CD8-positive, alpha-beta T cell (primary cell): ENCODE measurements at regions of chr17 and their contacts with region 1.

Region 1: DNA sequence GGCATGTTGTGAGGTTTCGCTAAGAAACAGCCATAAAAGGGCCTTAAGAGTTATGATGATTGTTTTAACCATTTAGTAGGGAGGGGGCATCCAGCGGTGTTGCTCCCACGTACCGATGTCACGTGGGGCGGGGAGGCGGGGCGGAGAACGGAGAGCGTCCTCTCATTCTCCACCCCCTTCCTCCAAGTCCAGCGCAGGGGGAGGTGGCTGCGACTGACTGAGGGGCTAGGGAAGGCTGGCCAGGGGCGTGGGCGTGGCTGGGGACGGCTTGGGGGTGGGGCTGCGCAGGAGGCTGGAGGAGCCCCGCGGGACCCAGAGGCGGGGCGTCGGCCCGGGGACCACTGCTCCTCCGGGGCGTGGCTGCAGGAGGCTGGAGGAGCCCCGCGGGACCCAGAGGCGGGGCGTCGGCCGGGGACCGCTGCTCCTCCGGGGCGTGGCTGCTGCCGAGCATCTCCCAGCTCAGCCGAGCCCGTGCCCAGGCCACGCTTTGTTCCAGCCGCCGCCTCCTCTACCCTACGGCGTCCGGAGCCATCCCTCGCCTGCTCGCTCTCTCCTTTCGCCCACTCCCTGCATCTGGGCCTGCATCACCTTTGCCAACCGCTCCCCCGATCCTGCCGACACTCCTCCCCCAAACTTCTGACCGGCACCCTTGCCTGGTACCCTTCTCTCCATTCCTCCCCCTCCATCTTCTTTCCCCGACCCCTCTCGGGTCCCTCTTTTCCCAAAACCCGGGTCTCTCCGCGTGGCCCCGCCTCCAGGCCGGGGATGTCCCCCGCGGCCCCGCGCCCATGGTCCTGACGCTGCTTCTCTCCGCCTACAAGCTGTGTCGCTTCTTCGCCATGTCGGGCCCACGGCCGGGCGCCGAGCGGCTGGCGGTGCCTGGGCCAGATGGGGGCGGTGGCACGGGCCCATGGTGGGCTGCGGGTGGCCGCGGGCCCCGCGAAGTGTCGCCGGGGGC is at the start of gene SARM1:
- DNase-seq: peak; percentile 45 to 91 (median 81)
- ATAC-seq: peak; percentile 86
- H3K4me3 ChIP-seq: peak within 1 kb of the TSS; percentile 79
- H3K4me3 Mint-ChIP-seq: peak within 1 kb of the TSS; percentile 90
- H3K27ac ChIP-seq: peak within 1 kb of the TSS; percentile 69 to 93
- H3K27ac Mint-ChIP-seq: peak within 1 kb of the TSS; percentile 91
- H3K4me1 ChIP-seq: peaks cover 21% of the 10 kb centered on the region
- H3K4me1 Mint-ChIP-seq: peaks cover 25% of the 10 kb centered on the region
- H3K27me3 ChIP-seq: no peaks in the 10 kb centered on the region
- H3K27me3 Mint-ChIP-seq: no peaks in the 10 kb centered on the region
- CTCF ChIP-seq: no peak
- total RNA-seq, gene SARM1: 12.9 to 13.9 TPM

Region 2: DNA sequence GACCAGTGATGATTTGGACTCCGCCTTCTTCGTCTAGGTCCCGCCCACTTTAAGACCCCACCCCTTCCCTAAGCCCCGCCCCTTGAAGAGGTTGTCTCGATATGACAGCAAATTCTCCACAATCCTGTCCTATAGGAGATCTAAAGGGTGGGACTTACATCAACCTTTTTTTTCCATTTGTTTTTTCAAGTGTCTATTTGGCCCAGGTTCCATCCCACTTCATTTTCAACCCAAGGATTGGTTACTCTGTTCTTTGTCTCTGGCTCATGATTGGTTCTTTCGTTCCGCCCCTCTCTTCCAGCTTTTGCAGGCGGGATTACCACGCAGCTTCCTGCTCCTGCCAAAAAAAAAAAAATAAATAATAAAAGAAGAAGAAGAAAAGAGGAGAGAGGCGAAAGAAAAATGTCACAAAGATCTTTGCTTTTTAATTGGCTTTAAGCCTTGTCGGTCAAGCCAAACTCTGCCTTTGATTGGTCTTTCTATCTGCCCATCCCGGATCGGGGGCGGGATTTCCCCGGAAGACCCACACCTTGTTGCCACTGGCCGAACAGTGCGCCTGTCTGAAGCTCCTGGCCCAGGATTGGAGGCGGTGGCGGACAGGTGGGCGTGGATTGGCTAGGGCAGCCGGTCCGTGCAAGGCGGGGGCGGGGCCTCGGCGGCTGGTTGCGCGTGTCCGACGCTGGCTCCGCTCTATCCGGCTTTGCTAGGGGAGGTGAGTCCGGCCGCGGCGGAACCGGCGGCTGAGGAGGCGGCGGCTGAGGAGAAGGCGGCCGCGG is 330.3 kb before region 1 on chr17:
- CTCF ChIA-PET with region 1: no interaction called
- POLR2A ChIA-PET with region 1: no interaction called
- intact Hi-C with region 1: loop called in 1 of 2 experiments (anchors 5 kb)
- DNase-seq: peak; percentile 97 to 100 (median 99)
- ATAC-seq: peak; percentile 91
- H3K4me3 ChIP-seq: peak overlapping the region; percentile 62 to 76
- H3K4me3 Mint-ChIP-seq: peak overlapping the region; percentile 87
- H3K27ac ChIP-seq: peak overlapping the region; percentile 24 to 77
- H3K27ac Mint-ChIP-seq: peak overlapping the region; percentile 89
- H3K4me1 ChIP-seq: peaks cover 27% of the 10 kb centered on the region
- H3K4me1 Mint-ChIP-seq: peaks cover 53% of the 10 kb centered on the region
- H3K27me3 ChIP-seq: no peaks in the 10 kb centered on the region
- H3K27me3 Mint-ChIP-seq: no peaks in the 10 kb centered on the region
- CTCF ChIP-seq: no peak

Region 3: GRCh38 chr17:28318759-28319660 is 52.5 kb before region 1 on chr17 and contains the start of gene TMEM97:
- CTCF ChIA-PET with region 1: no interaction called
- POLR2A ChIA-PET with region 1: no interaction called
- intact Hi-C with region 1: loop called in 1 of 2 experiments (anchors 1 kb)
- DNase-seq: peak; percentile 86 to 98 (median 93)
- ATAC-seq: peak; percentile 98
- H3K4me3 ChIP-seq: peak within 1 kb of the TSS; percentile 82
- H3K4me3 Mint-ChIP-seq: peak within 1 kb of the TSS; percentile 84
- H3K27ac ChIP-seq: peak within 1 kb of the TSS; percentile 46 to 52
- H3K27ac Mint-ChIP-seq: peak within 1 kb of the TSS; percentile 49
- H3K4me1 ChIP-seq: peaks cover 19% of the 10 kb centered on the region
- H3K4me1 Mint-ChIP-seq: peaks cover 19% of the 10 kb centered on the region
- H3K27me3 ChIP-seq: no peaks in the 10 kb centered on the region
- H3K27me3 Mint-ChIP-seq: no peaks in the 10 kb centered on the region
- CTCF ChIP-seq: no peak
- total RNA-seq, gene TMEM97: 3.7 to 4.6 TPM

Region 4: GRCh38 chr17:28357061-28357900 is 14.2 kb before region 1 on chr17 and contains the start of gene POLDIP2:
- CTCF ChIA-PET with region 1: interaction called, 5 read pairs
- POLR2A ChIA-PET with region 1: interaction called, 20 read pairs
- intact Hi-C with region 1: loop called (anchors 1 kb)
- DNase-seq: peak; percentile 91 to 97 (median 96)
- ATAC-seq: peak; percentile 98
- H3K4me3 ChIP-seq: peak within 1 kb of the TSS; percentile 92 to 94
- H3K4me3 Mint-ChIP-seq: peak within 1 kb of the TSS; percentile 94
- H3K27ac ChIP-seq: peak within 1 kb of the TSS; percentile 82 to 93
- H3K27ac Mint-ChIP-seq: peak within 1 kb of the TSS; percentile 96
- H3K4me1 ChIP-seq: peaks cover 25% of the 10 kb centered on the region
- H3K4me1 Mint-ChIP-seq: peaks cover 30% of the 10 kb centered on the region
- H3K27me3 ChIP-seq: no peaks in the 10 kb centered on the region
- H3K27me3 Mint-ChIP-seq: no peaks in the 10 kb centered on the region
- CTCF ChIP-seq: no peak
- total RNA-seq, gene POLDIP2: 26.8 to 27.5 TPM

Region 5: GRCh38 chr17:28416703-28417311 is 45.3 kb after region 1 on chr17:
- CTCF ChIA-PET with region 1: interaction called, 4 read pairs
- POLR2A ChIA-PET with region 1: no interaction called
- intact Hi-C with region 1: loop called (anchors 1 to 2 kb)
- DNase-seq: peak; percentile 24 to 71 (median 51)
- ATAC-seq: peak; percentile 73
- H3K4me3 ChIP-seq: no peak overlapping the region
- H3K4me3 Mint-ChIP-seq: no peak overlapping the region
- H3K27ac ChIP-seq: no peak overlapping the region
- H3K27ac Mint-ChIP-seq: no peak overlapping the region
- H3K4me1 ChIP-seq: no peaks in the 10 kb centered on the region
- H3K4me1 Mint-ChIP-seq: no peaks in the 10 kb centered on the region
- H3K27me3 ChIP-seq: no peaks in the 10 kb centered on the region
- H3K27me3 Mint-ChIP-seq: peaks cover 5% of the 10 kb centered on the region
- CTCF ChIP-seq: peak; percentile 72

Region 6: GRCh38 chr17:28552246-28552999 is 180.9 kb after region 1 on chr17 and contains the start of gene UNC119:
- CTCF ChIA-PET with region 1: no interaction called
- POLR2A ChIA-PET with region 1: no interaction called
- intact Hi-C with region 1: loop called in 1 of 2 experiments (anchors 5 kb)
- DNase-seq: peak; percentile 48 to 88 (median 76)
- ATAC-seq: peak; percentile 80
- H3K4me3 ChIP-seq: peak within 1 kb of the TSS; percentile 47 to 48
- H3K4me3 Mint-ChIP-seq: peak within 1 kb of the TSS; percentile 90
- H3K27ac ChIP-seq: peak within 1 kb of the TSS in 1 of 2 experiments; percentile 10
- H3K27ac Mint-ChIP-seq: peak within 1 kb of the TSS; percentile 86
- H3K4me1 ChIP-seq: peaks cover 53% of the 10 kb centered on the region
- H3K4me1 Mint-ChIP-seq: peaks cover 50% of the 10 kb centered on the region
- H3K27me3 ChIP-seq: no peaks in the 10 kb centered on the region
- H3K27me3 Mint-ChIP-seq: no peaks in the 10 kb centered on the region
- CTCF ChIP-seq: no peak
- total RNA-seq, gene UNC119: 48.9 to 49.9 TPM